Psoas muscle (tissue), 8 donors: ENCODE measurements at regions of chr2 and their contacts with region 1.

Region 1: GRCh38 chr2:43417300-43417699 is 178.5 kb downstream of the THADA start:
- DNase-seq: no peak
- ATAC-seq: no peak
- H3K4me3 ChIP-seq: no peak overlapping the region
- H3K27ac ChIP-seq: no peak overlapping the region
- H3K4me1 ChIP-seq: peaks cover 26% of the 10 kb centered on the region
- H3K27me3 ChIP-seq: no peaks in the 10 kb centered on the region
- CTCF ChIP-seq: no peak

Region 2: GRCh38 chr2:43402452-43402944 is 14.8 kb before region 1 on chr2:
- intact Hi-C with region 1: no loop called
- DNase-seq: no peak
- ATAC-seq: no peak
- H3K4me3 ChIP-seq: no peak overlapping the region
- H3K27ac ChIP-seq: no peak overlapping the region
- H3K4me1 ChIP-seq: peaks cover 41% of the 10 kb centered on the region
- H3K27me3 ChIP-seq: no peaks in the 10 kb centered on the region
- CTCF ChIP-seq: no peak

Region 3: GRCh38 chr2:43441195-43441594 is 23.9 kb after region 1 on chr2:
- intact Hi-C with region 1: loop called in 1 of 2 experiments (anchors 2 kb)
- DNase-seq: no peak
- ATAC-seq: no peak
- H3K4me3 ChIP-seq: no peak overlapping the region
- H3K27ac ChIP-seq: no peak overlapping the region
- H3K4me1 ChIP-seq: no peaks in the 10 kb centered on the region
- H3K27me3 ChIP-seq: no peaks in the 10 kb centered on the region
- CTCF ChIP-seq: no peak

Region 4: GRCh38 chr2:43455731-43456642 is 38.7 kb after region 1 on chr2:
- intact Hi-C with region 1: loop called in 1 of 2 experiments (anchors 5 kb)
- DNase-seq: no peak
- ATAC-seq: peak in 1 of 4 donors; percentile 34
- H3K4me3 ChIP-seq: no peak overlapping the region
- H3K27ac ChIP-seq: no peak overlapping the region
- H3K4me1 ChIP-seq: peaks cover 58% of the 10 kb centered on the region
- H3K27me3 ChIP-seq: no peaks in the 10 kb centered on the region
- CTCF ChIP-seq: no peak

Region 5: GRCh38 chr2:43542285-43542937 is 125.1 kb after region 1 on chr2:
- intact Hi-C with region 1: no loop called
- DNase-seq: no peak
- ATAC-seq: peak in 1 of 4 donors; percentile 46
- H3K4me3 ChIP-seq: no peak overlapping the region
- H3K27ac ChIP-seq: no peak overlapping the region
- H3K4me1 ChIP-seq: peaks cover 9% of the 10 kb centered on the region
- H3K27me3 ChIP-seq: no peaks in the 10 kb centered on the region
- CTCF ChIP-seq: peak; percentile 71

Region 6: DNA sequence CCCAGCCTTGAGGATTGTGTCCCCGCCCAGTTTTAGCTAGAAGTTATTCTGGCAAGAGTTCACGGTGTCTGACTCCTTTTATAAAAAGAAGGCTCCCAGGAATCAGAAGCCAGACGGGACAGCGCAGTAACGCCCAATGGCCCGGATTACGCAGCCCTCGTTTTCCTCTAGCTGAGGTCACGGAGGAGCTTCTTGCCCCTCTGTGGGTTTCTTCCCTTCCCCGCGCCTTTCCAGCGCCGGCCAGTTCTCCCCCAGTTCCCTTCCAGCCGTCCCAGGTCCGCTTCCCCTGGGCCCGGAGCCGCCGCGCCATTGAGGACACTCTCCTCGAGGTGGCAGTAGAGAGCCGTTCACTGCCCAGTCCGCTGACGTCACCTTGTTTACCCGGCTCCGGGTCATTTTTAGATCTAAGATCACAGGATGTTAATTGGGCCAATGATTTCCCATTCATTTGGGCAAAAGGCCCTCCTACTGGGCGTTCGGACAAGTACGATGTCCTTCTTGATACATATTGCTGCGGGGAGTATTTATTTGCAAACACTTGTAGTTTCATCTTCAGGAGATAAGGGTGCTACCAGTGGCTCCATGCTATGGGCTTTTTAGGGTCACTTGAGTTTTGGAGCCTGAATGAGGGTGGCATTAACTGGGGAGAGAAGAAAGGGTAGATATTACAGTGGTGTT is 669.9 kb after region 1 on chr2:
- intact Hi-C with region 1: no loop called
- DNase-seq: peak; percentile 84 to 93
- ATAC-seq: peak; percentile 90 to 95 (median 93)
- H3K4me3 ChIP-seq: peak overlapping the region; percentile 57
- H3K27ac ChIP-seq: peak overlapping the region; percentile 90
- H3K4me1 ChIP-seq: peaks cover 43% of the 10 kb centered on the region
- H3K27me3 ChIP-seq: no peaks in the 10 kb centered on the region
- CTCF ChIP-seq: peak; percentile 97